ENCODE measurements at regions of chr16 and their contacts with region 1.

Region 1: GRCh38 chr16:75622761-75623605 is at the start of gene ADAT1:
- DNase-seq: peak; percentile 94 to 95
- H3K4me3 ChIP-seq: peak within 1 kb of the TSS; percentile 88
- H3K27ac ChIP-seq: peak within 1 kb of the TSS; percentile 59
- H3K4me1 ChIP-seq: peaks cover 17% of the 10 kb centered on the region
- H3K27me3 ChIP-seq: no peaks in the 10 kb centered on the region
- CTCF ChIP-seq: no peak
- total RNA-seq, gene ADAT1: 57.9 and 66.4 TPM in 2 replicates

Region 2: DNA sequence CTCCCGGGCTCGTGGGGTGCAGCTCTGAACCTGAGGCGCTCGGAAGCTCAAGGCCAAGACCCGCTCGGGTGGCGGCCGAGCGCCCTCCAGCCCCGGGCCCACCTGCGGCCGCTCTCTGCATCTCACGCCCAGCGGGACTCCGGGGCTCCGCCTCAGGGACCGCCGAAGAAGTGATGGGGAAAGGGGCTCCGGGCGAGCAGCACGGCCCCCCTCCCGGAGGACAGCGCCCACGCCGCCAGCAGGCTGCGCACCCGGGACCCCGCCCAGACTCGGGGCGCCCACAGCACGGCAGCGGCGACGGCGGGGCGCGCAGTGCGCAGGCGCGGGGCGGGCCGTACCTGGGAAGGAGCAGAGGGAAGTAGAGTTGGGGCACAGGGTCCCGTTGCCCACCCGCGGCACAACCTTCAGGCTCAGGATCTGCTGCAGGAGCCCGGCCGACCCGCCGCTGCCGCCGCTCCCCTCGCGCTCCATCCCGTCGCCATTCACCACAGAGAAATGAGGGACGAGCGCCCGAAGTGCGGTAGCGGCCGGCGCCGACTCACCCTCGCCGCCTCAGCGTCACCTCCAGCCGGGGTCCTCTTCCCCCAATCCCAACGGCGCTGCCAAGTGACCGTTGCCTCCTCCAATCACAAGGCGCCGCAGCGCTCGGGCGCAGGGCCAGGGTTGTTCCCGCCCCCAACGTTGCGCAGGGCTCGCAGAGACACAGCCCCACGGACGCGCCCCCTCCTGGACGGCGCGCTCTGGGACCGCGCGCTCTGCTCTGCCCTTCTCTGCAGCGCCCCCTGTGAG is 158.7 kb before region 1 on chr16 and contains the start of gene TMEM170A:
- CTCF ChIA-PET with region 1: no interaction called
- POLR2A ChIA-PET with region 1: no interaction called
- intact Hi-C with region 1: loop called (anchors 2 kb)
- DNase-seq: peak; percentile 91 to 99
- H3K4me3 ChIP-seq: peak within 1 kb of the TSS; percentile 61
- H3K27ac ChIP-seq: peak within 1 kb of the TSS; percentile 45
- H3K4me1 ChIP-seq: peaks cover 18% of the 10 kb centered on the region
- H3K27me3 ChIP-seq: no peaks in the 10 kb centered on the region
- CTCF ChIP-seq: peak; percentile 100
- total RNA-seq, gene TMEM170A: 31.4 and 31.7 TPM in 2 replicates

Region 3: DNA sequence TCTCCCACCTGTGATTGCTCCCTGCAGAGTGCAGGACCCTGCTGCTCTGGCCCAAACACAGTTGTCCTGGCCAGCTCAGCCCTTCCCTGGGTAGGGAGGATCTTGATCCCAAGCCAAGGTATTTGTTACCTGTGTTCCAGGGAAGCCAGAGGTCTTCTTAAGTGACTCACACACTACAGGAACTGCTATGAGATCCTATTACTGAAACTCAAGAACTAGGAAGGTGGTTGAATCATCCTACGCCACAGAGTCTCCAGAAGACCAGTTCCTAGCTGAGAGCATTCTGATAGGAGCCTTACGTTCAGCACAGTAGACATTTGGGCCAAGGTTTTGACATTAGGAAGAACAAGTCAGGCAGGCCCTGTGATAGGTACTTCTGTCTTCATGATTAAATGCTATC is 139.8 kb before region 1 on chr16:
- CTCF ChIA-PET with region 1: no interaction called
- POLR2A ChIA-PET with region 1: interaction called, 10 read pairs
- intact Hi-C with region 1: no loop called
- DNase-seq: peak; percentile 65 to 99
- H3K4me3 ChIP-seq: peak overlapping the region; percentile 21; the same call in 1 of the 2 replicates
- H3K27ac ChIP-seq: peak overlapping the region; percentile 98
- H3K4me1 ChIP-seq: peaks cover 46% of the 10 kb centered on the region
- H3K27me3 ChIP-seq: no peaks in the 10 kb centered on the region
- CTCF ChIP-seq: no peak

Region 4: DNA sequence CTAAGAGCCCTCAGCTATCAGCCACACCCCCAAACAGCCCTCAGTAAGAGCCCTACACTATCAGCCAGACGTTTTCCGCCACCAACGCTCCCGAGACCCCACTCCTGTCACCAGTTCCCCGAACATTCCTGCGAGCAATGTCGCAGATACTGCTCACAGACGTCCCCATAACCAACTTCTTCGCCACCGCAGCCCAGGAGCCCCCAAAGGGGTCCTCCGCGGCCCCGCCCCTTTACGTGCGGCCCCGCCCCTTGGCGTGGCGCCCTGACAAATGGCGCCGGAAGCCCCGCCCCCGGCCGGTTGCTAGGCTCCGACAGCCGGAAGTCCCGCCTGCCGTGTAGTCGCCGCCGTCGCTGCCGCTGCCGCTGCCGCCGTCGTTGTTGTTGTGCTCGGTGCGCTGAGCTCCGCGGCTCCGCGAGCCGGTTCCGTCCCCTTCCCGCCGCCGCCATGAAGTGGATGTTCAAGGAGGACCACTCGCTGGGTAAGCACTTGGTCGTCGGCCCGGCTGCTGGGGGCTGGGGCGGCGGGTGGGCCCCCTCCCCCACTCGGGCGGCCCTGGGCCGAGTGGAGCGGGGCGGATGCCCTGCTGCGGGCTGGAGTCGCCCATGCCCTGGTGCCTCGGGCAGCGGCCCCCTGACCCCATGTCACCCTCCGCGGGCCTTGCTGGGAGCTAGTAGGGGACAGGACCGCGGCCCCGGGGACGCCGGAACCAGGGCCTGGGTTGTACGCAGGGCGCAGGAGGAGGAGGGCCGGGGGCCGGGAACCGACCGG is 56.8 kb before region 1 on chr16 and contains the start of gene GABARAPL2:
- CTCF ChIA-PET with region 1: interaction called, 4 read pairs
- POLR2A ChIA-PET with region 1: no interaction called
- intact Hi-C with region 1: loop called (anchors 2 kb)
- DNase-seq: peak; percentile 57 to 82
- H3K4me3 ChIP-seq: peak within 1 kb of the TSS; percentile 94
- H3K27ac ChIP-seq: no peak within 1 kb of the TSS
- H3K4me1 ChIP-seq: peaks cover 17% of the 10 kb centered on the region; the same call in 1 of the 2 replicates
- H3K27me3 ChIP-seq: no peaks in the 10 kb centered on the region
- CTCF ChIP-seq: no peak
- total RNA-seq, gene GABARAPL2: 86.1 and 103 TPM in 2 replicates

Region 5: GRCh38 chr16:75647492-75648264 is 24.7 kb after region 1 on chr16 and contains the starts of genes KARS1 and TERF2IP:
- CTCF ChIA-PET with region 1: interaction called, 18 read pairs
- POLR2A ChIA-PET with region 1: interaction called, 4 read pairs
- intact Hi-C with region 1: loop called (anchors 1 kb)
- DNase-seq: peak; percentile 83 to 91
- H3K4me3 ChIP-seq: peak within 1 kb of the TSS; percentile 98
- H3K27ac ChIP-seq: peak within 1 kb of the TSS; percentile 67
- H3K4me1 ChIP-seq: peaks cover 27% of the 10 kb centered on the region
- H3K27me3 ChIP-seq: no peaks in the 10 kb centered on the region
- CTCF ChIP-seq: no peak
- total RNA-seq, gene KARS1: 101 and 132 TPM in 2 replicates
- total RNA-seq, gene TERF2IP: 16.9 and 19.3 TPM in 2 replicates

Measured in PC-9 (cell line).